ENCODE measurements at regions of chr1 and their contacts with region 1.

Region 1: GRCh38 chr1:174800216-174800851 is 199.4 kb upstream of the CACYBP start:
- DNase-seq: no peak
- ATAC-seq: peak; percentile 21
- H3K4me3 ChIP-seq: peak overlapping the region; percentile 79
- H3K27ac ChIP-seq: peak overlapping the region; percentile 77
- H3K4me1 ChIP-seq: peaks cover 23% of the 10 kb centered on the region
- H3K27me3 ChIP-seq: no peaks in the 10 kb centered on the region
- CTCF ChIP-seq: no peak
- EP300 ChIP-seq: no peak
- POLR2A ChIP-seq: no peak
- RAD21 ChIP-seq: no peak

Region 2: DNA sequence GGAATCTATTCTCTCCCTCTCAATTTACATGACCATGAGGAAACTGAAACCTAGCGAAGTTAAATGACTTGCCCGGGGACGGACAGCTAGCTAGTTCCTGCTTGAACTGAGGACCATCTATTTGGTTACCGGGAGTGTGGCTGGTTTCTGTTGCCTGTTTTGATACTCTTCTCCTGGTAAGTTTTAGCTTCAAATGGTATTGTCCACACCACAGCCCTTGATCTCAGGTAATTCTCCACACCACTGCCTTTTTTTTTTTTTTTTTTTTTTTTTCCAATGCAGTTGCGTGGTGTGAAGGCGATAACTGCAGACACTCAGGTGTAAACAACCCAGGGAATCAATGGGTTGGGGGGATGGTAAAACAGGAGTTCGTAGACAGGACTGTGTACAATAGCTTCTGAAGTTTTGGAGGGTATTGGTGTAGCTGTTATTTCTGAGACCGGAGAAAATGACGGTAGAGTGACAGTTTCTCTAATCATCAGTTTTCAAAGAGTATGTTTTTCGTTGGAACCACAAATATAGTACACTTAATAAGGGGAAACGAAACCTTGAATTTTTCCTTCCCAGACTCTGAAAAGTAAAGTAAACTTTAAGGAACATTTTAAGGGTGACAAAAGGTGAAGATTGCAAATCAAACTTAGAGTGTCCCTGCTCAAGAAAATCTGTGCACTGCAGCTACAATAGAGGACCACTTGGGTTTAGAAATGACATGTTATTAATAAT is 74.2 kb after region 1 on chr1:
- CTCF ChIA-PET with region 1: no interaction called
- POLR2A ChIA-PET with region 1: no interaction called
- RAD21 ChIA-PET with region 1: interaction called, 16 read pairs
- SMC1A ChIA-PET with region 1: interaction called, 4 read pairs
- in situ Hi-C with region 1: no loop called
- intact Hi-C with region 1: no loop called
- DNase-seq: peak; percentile 40
- ATAC-seq: peak; percentile 83
- H3K4me3 ChIP-seq: peak overlapping the region; percentile 54; the same call in 1 of the 2 replicates
- H3K27ac ChIP-seq: peak overlapping the region; percentile 47
- H3K4me1 ChIP-seq: peaks cover 25% of the 10 kb centered on the region
- H3K27me3 ChIP-seq: no peaks in the 10 kb centered on the region
- CTCF ChIP-seq: no peak
- EP300 ChIP-seq: no peak
- POLR2A ChIP-seq: no peak
- RAD21 ChIP-seq: no peak

Measured in GM12878 (cell line).